ENCODE measurements at regions of chr3 and their contacts with region 1.

Region 1: GRCh38 chr3:132730891-132731580 is 8.8 kb upstream of the NPHP3 start:
- DNase-seq: peak; percentile 63

Region 2: GRCh38 chr3:132652640-132653270 is 78.3 kb before region 1 on chr3:
- CTCF ChIA-PET with region 1: no interaction called
- POLR2A ChIA-PET with region 1: no interaction called
- DNase-seq: no peak

Region 3: DNA sequence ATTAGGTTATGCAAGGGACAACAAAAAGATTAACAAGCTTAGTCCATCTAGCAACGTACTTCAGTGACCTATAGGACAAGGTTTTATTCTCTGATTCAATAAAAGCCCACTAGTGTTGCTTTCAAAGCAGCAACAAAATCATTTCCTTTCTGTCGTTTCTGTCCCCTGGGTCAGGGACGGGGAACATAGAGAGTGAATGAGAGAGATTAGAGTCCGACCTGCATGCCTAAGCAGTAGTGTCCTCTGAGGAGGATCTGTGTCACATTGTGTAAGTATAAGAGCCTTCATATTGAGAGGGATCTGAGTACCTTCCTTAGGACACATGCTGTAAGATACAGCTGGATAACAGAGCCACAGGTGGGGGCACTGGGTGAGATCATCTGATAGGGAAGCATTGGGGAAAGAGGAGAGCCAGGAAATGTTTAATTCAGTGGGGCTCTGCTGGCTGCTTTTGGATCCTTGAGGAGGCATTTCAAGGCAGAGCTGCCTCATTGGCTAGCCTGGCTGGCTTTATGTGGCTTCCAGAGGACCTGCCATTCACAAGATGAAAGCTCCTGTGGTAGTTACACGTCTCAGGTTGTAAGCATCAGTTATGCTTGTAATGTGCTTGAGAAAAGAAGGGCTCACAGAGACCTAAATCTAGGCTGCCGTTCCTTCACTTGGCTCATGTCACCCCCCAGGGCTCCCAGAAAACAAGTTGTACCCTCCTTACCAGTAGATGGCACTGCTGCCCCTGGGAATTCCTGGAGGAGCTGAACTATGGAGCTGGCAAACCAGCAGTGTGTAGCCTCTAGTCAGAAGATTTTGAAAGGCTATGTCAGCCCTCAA is 309.9 kb after region 1 on chr3:
- CTCF ChIA-PET with region 1: interaction called, 10 read pairs
- POLR2A ChIA-PET with region 1: no interaction called
- DNase-seq: peak; percentile 75